ENCODE measurements at regions of chr4 and their contacts with region 1.

Region 1: DNA sequence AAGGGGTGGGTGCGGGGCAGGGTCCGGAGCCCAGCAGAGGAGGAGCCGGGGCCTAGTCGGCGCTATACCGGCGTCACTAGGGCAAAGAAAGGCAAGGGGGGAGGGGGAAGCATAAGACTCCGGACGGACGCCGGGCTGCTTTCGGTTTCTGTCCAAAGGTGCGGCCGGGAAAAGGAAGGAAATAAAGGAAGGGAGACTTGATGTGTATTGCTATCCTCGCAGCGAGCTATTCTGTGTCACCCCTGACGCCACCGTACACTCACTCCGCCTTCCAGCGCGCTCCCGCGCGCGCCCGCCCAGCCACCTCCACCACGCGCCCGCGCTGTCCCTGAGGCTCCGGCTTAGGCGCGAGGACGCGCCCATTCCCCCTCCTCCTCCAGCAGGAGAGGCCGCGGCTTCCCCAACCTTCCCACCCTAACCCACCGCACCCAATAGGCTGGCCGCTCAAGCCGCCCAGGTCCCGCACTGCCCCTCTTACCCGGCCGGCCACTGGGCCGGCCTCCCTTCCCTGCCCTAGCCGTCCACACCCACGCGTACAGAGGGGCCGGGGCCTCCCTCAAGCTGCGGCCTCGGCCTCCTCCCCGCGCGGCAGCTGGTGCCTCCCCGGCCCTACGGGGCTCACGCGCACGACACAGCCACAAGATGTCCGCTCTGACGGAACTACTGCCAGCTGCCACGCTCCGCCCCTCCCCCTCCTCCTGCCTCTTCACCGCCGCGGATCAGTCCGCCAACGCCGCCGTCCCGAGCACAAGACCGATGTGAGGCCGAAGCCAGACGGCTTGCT is at the start of gene UBE2D3:
- DNase-seq: peak; percentile 92 to 97 (median 95)
- ATAC-seq: peak; percentile 72
- H3K4me3 ChIP-seq: peak within 1 kb of the TSS; percentile 82
- H3K4me3 Mint-ChIP-seq: no peak within 1 kb of the TSS
- H3K27ac ChIP-seq: peak within 1 kb of the TSS; percentile 99
- H3K27ac Mint-ChIP-seq: no peak within 1 kb of the TSS
- H3K4me1 ChIP-seq: peaks cover 19 to 24% of the 10 kb centered on the region in 2 donors
- H3K4me1 Mint-ChIP-seq: peaks cover 24 to 46% (median 40%) of the 10 kb centered on the region in 7 donors
- H3K27me3 ChIP-seq: no peaks in the 10 kb centered on the region
- H3K27me3 Mint-ChIP-seq: peaks cover 0 to 2% (median 0%) of the 10 kb centered on the region in 5 donors
- total RNA-seq, gene UBE2D3: 339 to 556 (median 413) TPM

Region 2: DNA sequence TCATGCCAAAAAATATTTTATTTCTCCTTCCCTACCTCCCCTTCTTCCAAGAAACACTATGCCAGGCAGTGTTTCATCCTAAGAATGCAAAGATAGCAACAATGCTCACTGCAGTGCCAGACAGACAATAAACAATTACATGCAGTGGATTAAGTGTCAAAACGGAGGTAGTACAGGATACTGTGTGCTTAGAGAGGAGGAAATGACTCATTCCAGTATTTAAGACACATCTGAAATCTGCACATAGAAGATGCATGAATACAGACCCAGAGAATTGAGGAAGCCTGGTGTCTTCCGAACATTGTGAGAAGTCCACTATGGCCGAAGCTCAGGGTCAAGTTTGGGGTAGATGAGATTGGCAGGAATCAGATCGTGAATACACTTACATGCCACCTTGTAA is 1806.1 kb before region 1 on chr4:
- CTCF ChIA-PET with region 1: no interaction called
- POLR2A ChIA-PET with region 1: no interaction called
- intact Hi-C with region 1: loop called in 1 of 2 experiments (anchors 5 kb)
- DNase-seq: peak in 3 of 9 donors; percentile 3 to 10 (median 10)
- ATAC-seq: peak; percentile 82
- H3K4me3 ChIP-seq: peak overlapping the region; percentile 21
- H3K4me3 Mint-ChIP-seq: peak overlapping the region in 4 of 10 donors; percentile 3 to 76 (median 46)
- H3K27ac ChIP-seq: no peak overlapping the region
- H3K27ac Mint-ChIP-seq: peak overlapping the region; percentile 8 to 90 (median 59)
- H3K4me1 ChIP-seq: peaks cover 0 to 48% of the 10 kb centered on the region in 2 donors
- H3K4me1 Mint-ChIP-seq: peaks cover 21 to 55% (median 34%) of the 10 kb centered on the region in 7 donors
- H3K27me3 ChIP-seq: no peaks in the 10 kb centered on the region
- H3K27me3 Mint-ChIP-seq: no peaks in the 10 kb centered on the region

Region 3: DNA sequence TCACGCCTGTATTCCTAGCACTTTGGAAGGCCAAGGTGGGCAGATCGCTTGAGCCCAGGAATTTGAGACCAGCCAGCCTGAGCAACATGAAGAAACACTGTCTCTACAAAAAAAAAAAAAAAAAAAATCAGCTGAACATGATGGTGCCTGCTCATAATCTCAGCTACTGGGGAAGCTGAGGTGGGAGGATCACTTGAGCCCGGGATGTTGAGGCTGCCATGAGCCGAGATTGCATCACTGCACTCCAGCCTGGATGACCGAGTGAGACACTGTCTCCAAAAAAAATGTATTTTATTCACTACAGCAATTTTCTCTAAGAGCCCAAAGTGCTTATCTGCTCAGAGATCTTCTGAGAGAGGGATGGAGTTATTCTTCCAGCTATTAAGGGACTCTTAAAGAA is 1264.0 kb before region 1 on chr4:
- CTCF ChIA-PET with region 1: no interaction called
- POLR2A ChIA-PET with region 1: no interaction called
- intact Hi-C with region 1: no loop called
- DNase-seq: no peak
- ATAC-seq: no peak
- H3K4me3 ChIP-seq: no peak overlapping the region
- H3K4me3 Mint-ChIP-seq: no peak overlapping the region
- H3K27ac ChIP-seq: no peak overlapping the region
- H3K27ac Mint-ChIP-seq: no peak overlapping the region
- H3K4me1 ChIP-seq: no peaks in the 10 kb centered on the region
- H3K4me1 Mint-ChIP-seq: no peaks in the 10 kb centered on the region
- H3K27me3 ChIP-seq: no peaks in the 10 kb centered on the region
- H3K27me3 Mint-ChIP-seq: peaks cover 0 to 37% (median 8%) of the 10 kb centered on the region in 5 donors

Region 4: GRCh38 chr4:102598086-102598761 is 228.9 kb before region 1 on chr4:
- CTCF ChIA-PET with region 1: no interaction called
- POLR2A ChIA-PET with region 1: interaction called, 3 read pairs
- intact Hi-C with region 1: loop called in 1 of 2 experiments (anchors 5 kb)
- DNase-seq: peak in 7 of 9 donors; percentile 56 to 87 (median 79)
- ATAC-seq: peak; percentile 95
- H3K4me3 ChIP-seq: no peak overlapping the region
- H3K4me3 Mint-ChIP-seq: peak overlapping the region; percentile 8 to 86 (median 54)
- H3K27ac ChIP-seq: peak overlapping the region; percentile 51
- H3K27ac Mint-ChIP-seq: peak overlapping the region; percentile 78 to 94 (median 86)
- H3K4me1 ChIP-seq: peaks cover 27 to 45% of the 10 kb centered on the region in 2 donors
- H3K4me1 Mint-ChIP-seq: peaks cover 31 to 86% (median 74%) of the 10 kb centered on the region in 7 donors
- H3K27me3 ChIP-seq: no peaks in the 10 kb centered on the region
- H3K27me3 Mint-ChIP-seq: no peaks in the 10 kb centered on the region

Region 5: GRCh38 chr4:102792361-102792936 is 34.6 kb before region 1 on chr4:
- CTCF ChIA-PET with region 1: no interaction called
- POLR2A ChIA-PET with region 1: interaction called, 6 read pairs
- intact Hi-C with region 1: loop called in 1 of 2 experiments (anchors 2 kb)
- DNase-seq: no peak
- ATAC-seq: peak; percentile 41
- H3K4me3 ChIP-seq: no peak overlapping the region
- H3K4me3 Mint-ChIP-seq: no peak overlapping the region
- H3K27ac ChIP-seq: no peak overlapping the region
- H3K27ac Mint-ChIP-seq: peak overlapping the region in 6 of 9 donors; percentile 6 to 48 (median 28)
- H3K4me1 ChIP-seq: no peaks in the 10 kb centered on the region
- H3K4me1 Mint-ChIP-seq: peaks cover 8 to 27% (median 19%) of the 10 kb centered on the region in 7 donors
- H3K27me3 ChIP-seq: no peaks in the 10 kb centered on the region
- H3K27me3 Mint-ChIP-seq: no peaks in the 10 kb centered on the region

Region 6: DNA sequence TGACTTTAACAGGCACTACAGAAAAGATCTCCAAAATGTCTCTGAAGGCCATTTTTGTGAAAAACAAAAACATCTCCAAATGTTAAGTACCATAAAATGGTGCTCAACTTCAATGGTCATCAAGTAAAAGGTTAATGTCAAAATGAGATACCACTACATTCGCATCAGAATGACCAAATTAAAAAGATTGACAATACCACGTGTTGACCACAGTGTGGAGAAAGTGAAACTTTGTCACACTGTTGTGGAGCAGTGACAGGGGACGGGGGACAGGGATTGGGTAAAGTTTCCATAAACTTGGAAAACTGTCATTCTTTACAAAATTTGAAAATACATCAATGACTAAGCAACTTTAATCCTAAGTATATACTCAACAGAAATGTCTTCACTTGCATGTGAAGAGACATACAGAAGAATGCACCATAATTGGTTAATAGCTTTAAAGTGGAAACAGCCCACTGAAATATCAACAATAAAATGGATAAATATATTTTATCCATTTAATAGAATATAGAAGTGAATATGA is 22.6 kb after region 1 on chr4:
- CTCF ChIA-PET with region 1: no interaction called
- POLR2A ChIA-PET with region 1: interaction called, 5 read pairs
- intact Hi-C with region 1: loop called in 1 of 2 experiments (anchors 2 kb)
- DNase-seq: no peak
- ATAC-seq: no peak
- H3K4me3 ChIP-seq: no peak overlapping the region
- H3K4me3 Mint-ChIP-seq: no peak overlapping the region
- H3K27ac ChIP-seq: no peak overlapping the region
- H3K27ac Mint-ChIP-seq: no peak overlapping the region
- H3K4me1 ChIP-seq: no peaks in the 10 kb centered on the region
- H3K4me1 Mint-ChIP-seq: peaks cover 0 to 4% (median 0%) of the 10 kb centered on the region in 7 donors
- H3K27me3 ChIP-seq: no peaks in the 10 kb centered on the region
- H3K27me3 Mint-ChIP-seq: no peaks in the 10 kb centered on the region

Region 7: GRCh38 chr4:103075901-103076739 is 249.0 kb after region 1 on chr4:
- CTCF ChIA-PET with region 1: no interaction called
- POLR2A ChIA-PET with region 1: interaction called, 21 read pairs
- intact Hi-C with region 1: loop called (anchors 1 kb)
- DNase-seq: peak; percentile 53 to 75 (median 68)
- ATAC-seq: peak; percentile 83
- H3K4me3 ChIP-seq: peak overlapping the region; percentile 74
- H3K4me3 Mint-ChIP-seq: peak overlapping the region; percentile 77 to 97 (median 95)
- H3K27ac ChIP-seq: peak overlapping the region; percentile 87
- H3K27ac Mint-ChIP-seq: peak overlapping the region; percentile 86 to 99 (median 97)
- H3K4me1 ChIP-seq: peaks cover 10 to 17% of the 10 kb centered on the region in 2 donors
- H3K4me1 Mint-ChIP-seq: peaks cover 23 to 54% (median 47%) of the 10 kb centered on the region in 7 donors
- H3K27me3 ChIP-seq: no peaks in the 10 kb centered on the region
- H3K27me3 Mint-ChIP-seq: no peaks in the 10 kb centered on the region

Measured in naive thymus-derived CD4-positive, alpha-beta T cell (primary cell).